AG04449 (cell line): ENCODE measurements at regions of chr13 and their contacts with region 1.

Region 1: DNA sequence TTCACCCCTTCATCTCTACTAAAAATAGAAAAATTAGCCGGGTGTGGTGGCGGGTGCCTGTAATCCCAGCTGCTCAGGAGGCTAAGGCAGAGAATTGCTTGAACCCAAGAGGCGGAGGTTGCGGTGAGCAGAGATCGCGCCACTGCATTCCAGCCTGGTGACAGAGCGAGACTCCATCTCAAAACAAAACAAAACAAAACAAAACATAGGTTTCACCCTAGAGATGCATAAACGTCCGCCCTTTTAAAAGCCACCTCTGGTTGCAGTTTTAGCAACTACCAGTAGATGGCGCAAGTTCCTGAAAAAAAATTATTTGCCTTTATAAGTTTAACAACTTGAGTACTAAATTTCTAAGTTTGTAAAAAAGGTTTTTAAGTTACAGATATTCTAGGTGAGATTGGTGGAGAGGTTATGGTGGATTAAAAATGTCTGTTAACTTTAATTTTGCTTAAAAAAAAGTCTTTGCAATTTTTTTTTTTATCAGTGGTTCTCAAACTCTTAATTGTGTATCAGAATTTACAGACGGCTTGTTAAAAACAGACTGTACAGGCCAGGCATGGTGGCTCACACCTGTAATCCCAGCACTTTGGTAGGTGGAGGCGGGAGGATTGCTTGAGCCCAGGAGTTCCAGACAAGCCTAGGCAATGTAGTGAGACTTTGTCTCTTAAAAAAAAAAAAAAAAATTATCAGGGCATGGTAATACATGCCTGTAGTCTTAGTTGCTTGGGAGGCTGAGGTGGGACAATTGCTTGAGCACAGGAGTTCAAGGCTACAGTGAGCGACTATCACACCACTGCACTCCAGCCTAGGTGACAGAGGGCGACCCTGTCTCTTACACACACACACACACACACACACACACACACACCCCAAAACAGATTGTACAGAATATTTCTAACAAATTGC is 42.1 kb downstream of the NAA16 start:
- DNase-seq: no peak
- H3K4me3 ChIP-seq: no peak overlapping the region
- CTCF ChIP-seq: peak; percentile 56

Region 2: DNA sequence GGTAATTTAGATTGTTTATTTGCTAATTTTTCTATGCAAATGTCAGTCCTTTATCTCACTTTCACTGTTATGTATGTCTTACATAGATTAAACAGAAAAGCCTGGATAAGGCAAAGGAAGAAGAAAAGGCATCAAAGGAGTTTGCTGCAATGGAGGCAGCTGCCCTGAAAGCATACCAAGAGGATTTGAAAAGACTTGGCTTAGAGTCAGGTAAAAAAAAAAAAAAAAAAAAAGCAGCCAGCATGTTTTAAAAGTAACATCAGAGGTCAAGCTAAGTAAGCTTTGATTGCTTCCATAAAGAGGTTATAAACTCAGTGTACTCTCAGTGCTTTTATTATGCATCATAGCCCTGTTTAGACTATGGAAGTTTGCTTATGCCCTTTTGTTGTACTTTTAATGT is 288.1 kb before region 1 on chr13:
- CTCF ChIA-PET with region 1: no interaction called
- POLR2A ChIA-PET with region 1: no interaction called
- DNase-seq: peak; percentile 65
- H3K4me3 ChIP-seq: no peak overlapping the region
- CTCF ChIP-seq: no peak

Region 3: DNA sequence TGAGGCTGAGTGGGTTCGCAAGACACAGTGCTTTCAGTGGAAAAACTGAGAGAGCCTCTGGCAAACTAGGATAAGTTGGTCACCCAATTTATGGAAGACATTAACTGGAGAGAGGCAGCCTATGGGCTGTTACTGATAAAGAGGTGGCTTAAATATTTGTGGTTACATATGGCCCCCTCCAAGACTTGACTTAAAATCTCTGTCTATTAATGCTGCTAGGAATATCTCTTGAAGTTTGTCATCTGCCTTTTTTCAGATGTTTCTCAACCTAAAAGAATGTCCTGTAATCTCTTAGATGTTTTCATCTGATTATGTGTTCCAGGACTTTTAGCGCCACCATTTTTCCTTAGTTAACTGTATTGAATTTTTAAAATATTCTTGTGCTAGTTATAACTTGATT is 12.4 kb after region 1 on chr13:
- CTCF ChIA-PET with region 1: interaction called, 12 read pairs
- POLR2A ChIA-PET with region 1: interaction called, 3 read pairs
- DNase-seq: peak; percentile 21
- H3K4me3 ChIP-seq: no peak overlapping the region
- CTCF ChIP-seq: no peak